ENCODE measurements at regions of chr1 and their contacts with region 1.

Region 1: GRCh38 chr1:55215256-55216021 is at the start of gene USP24:
- DNase-seq: peak; percentile 89
- ATAC-seq: peak; percentile 86
- H3K4me3 Mint-ChIP-seq: peak within 1 kb of the TSS; percentile 91
- H3K27ac Mint-ChIP-seq: peak within 1 kb of the TSS; percentile 97
- H3K4me1 Mint-ChIP-seq: peaks cover 53% of the 10 kb centered on the region
- H3K27me3 Mint-ChIP-seq: no peaks in the 10 kb centered on the region
- total RNA-seq, gene USP24: 53.8 to 63.7 TPM

Region 2: DNA sequence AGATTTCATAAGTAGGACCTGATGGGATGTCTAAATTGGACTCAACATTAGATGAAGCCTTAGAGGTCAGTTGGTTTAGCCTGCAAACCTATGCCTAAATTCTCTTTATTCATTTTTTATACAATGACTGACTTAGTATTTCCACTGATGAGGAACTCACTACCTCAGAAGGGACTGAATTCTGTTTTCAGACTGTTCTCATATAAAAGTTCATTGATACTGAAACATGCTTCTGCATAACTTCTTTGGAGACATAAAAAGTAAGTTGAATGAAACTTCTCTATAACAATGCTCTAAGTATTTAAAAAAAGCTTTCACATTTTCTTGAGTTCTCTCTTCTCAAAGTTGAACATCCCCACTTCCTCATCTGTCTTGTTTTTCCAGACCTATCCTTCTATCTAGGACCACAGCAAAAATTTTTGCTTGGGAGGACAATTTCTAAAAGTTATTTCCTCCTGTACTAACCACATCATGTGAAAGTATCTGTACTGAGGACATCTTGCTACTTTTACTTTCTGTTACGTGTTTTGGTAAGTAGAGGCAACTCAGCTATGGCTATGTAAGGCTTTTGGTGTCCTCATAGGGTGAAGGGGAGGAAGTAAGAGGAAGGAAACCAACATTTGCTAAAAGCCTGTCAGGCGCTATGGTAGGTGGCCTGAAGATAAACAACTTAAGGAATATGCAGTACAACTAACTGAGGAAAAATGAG is 64.4 kb before region 1 on chr1:
- POLR2A ChIA-PET with region 1: interaction called, 10 read pairs
- DNase-seq: no peak
- ATAC-seq: peak; percentile 100
- H3K4me3 Mint-ChIP-seq: peak overlapping the region; percentile 74
- H3K27ac Mint-ChIP-seq: peak overlapping the region; percentile 87
- H3K4me1 Mint-ChIP-seq: peaks cover 29% of the 10 kb centered on the region
- H3K27me3 Mint-ChIP-seq: no peaks in the 10 kb centered on the region

Region 3: DNA sequence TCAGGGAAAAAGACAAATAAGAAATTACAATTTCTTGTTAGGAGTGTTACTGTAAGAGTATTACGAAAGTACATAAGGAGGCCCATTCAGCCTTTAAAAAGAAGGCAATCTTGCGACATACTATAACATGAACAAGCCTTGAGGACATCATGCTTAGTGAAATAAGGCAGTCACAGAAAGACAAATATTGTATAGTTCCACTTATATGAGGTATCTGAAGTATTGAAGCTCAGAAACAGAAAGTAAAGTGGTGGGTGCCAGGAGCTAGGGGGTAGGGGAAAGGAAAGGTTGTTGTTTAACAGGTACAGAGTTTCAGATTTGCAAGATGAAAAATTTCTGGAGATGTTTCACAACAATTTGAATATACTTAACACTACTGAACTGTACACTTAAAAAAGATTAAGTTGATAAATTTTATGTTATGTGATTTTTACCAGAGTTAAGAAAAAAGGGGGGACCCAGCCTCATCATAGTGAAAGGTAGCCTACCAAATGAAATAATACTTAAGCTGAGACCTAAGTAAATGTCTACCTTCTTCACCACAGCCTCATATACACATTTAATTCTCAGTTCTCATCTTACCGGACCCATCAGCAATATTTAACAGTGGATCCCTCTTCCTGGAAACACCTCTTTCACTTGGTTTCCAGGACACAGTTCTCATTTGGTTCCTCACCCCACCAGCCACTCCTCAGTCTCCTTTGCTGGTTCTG is 19.8 kb before region 1 on chr1:
- POLR2A ChIA-PET with region 1: interaction called, 10 read pairs
- DNase-seq: no peak
- ATAC-seq: no peak
- H3K4me3 Mint-ChIP-seq: peak overlapping the region; percentile 39
- H3K27ac Mint-ChIP-seq: peak overlapping the region; percentile 10
- H3K4me1 Mint-ChIP-seq: peaks cover 39% of the 10 kb centered on the region
- H3K27me3 Mint-ChIP-seq: no peaks in the 10 kb centered on the region

Region 4: DNA sequence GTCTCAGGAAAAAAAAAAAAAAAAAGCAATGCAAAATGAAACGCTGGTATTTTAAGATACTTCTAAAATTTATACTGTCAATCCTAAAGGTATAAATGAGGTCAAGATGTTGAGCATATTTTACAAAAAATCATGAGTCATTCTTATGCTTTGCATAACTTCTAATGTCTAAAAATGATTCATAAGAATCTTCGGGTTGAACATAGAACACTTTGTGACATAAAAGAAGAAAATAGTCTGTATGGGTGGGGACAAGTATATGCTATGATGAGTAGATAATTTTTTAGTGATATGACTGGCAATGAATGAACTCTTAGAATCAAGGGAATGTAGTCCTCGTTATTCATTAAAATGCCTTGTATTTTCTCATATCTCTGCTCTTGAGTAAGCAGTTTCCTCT is 416.6 kb after region 1 on chr1:
- POLR2A ChIA-PET with region 1: no interaction called
- DNase-seq: no peak
- ATAC-seq: no peak
- H3K4me3 Mint-ChIP-seq: no peak overlapping the region
- H3K27ac Mint-ChIP-seq: no peak overlapping the region
- H3K4me1 Mint-ChIP-seq: no peaks in the 10 kb centered on the region
- H3K27me3 Mint-ChIP-seq: peaks cover 3% of the 10 kb centered on the region

Measured in activated naive CD8-positive, alpha-beta T cell treated with anti-CD3 and anti-CD28 coated beads, Interleukin-2, amount 10 ng/mL, durations not matched to agents 7 days and 5 days (primary cell).